Activated naive CD4-positive, alpha-beta T cell treated with anti-CD3 and anti-CD28 coated beads for 36 hours (primary cell): ENCODE measurements at regions of chr3 and their contacts with region 1.

Region 1: GRCh38 chr3:197501879-197502620 is 53.7 kb downstream of the BDH1 start:
- DNase-seq: peak; percentile 73
- H3K4me3 Mint-ChIP-seq: no peak overlapping the region
- H3K27ac Mint-ChIP-seq: no peak overlapping the region
- H3K4me1 Mint-ChIP-seq: no peaks in the 10 kb centered on the region
- H3K27me3 Mint-ChIP-seq: no peaks in the 10 kb centered on the region

Region 2: GRCh38 chr3:196979545-196979944 is 522.5 kb before region 1 on chr3:
- CTCF ChIA-PET with region 1: no interaction called
- intact Hi-C with region 1: loop called (anchors 2 kb)
- DNase-seq: no peak
- H3K4me3 Mint-ChIP-seq: no peak overlapping the region
- H3K27ac Mint-ChIP-seq: no peak overlapping the region
- H3K4me1 Mint-ChIP-seq: peaks cover 6% of the 10 kb centered on the region
- H3K27me3 Mint-ChIP-seq: peaks cover 7% of the 10 kb centered on the region

Region 3: GRCh38 chr3:197224034-197224444 is 278.0 kb before region 1 on chr3:
- CTCF ChIA-PET with region 1: interaction called, 18 read pairs
- intact Hi-C with region 1: loop called (anchors 1 kb)
- DNase-seq: no peak
- H3K4me3 Mint-ChIP-seq: no peak overlapping the region
- H3K27ac Mint-ChIP-seq: no peak overlapping the region
- H3K4me1 Mint-ChIP-seq: peaks cover 37% of the 10 kb centered on the region
- H3K27me3 Mint-ChIP-seq: no peaks in the 10 kb centered on the region

Region 4: GRCh38 chr3:197463279-197463678 is 38.8 kb before region 1 on chr3:
- CTCF ChIA-PET with region 1: no interaction called
- intact Hi-C with region 1: loop called (anchors 5 kb)
- DNase-seq: no peak
- H3K4me3 Mint-ChIP-seq: no peak overlapping the region
- H3K27ac Mint-ChIP-seq: peak overlapping the region; percentile 8
- H3K4me1 Mint-ChIP-seq: peaks cover 44% of the 10 kb centered on the region
- H3K27me3 Mint-ChIP-seq: peaks cover 17% of the 10 kb centered on the region

Region 5: GRCh38 chr3:197478746-197479668 is 23.0 kb before region 1 on chr3:
- CTCF ChIA-PET with region 1: no interaction called
- intact Hi-C with region 1: no loop called
- DNase-seq: no peak
- H3K4me3 Mint-ChIP-seq: no peak overlapping the region
- H3K27ac Mint-ChIP-seq: no peak overlapping the region
- H3K4me1 Mint-ChIP-seq: no peaks in the 10 kb centered on the region
- H3K27me3 Mint-ChIP-seq: peaks cover 3% of the 10 kb centered on the region

Region 6: DNA sequence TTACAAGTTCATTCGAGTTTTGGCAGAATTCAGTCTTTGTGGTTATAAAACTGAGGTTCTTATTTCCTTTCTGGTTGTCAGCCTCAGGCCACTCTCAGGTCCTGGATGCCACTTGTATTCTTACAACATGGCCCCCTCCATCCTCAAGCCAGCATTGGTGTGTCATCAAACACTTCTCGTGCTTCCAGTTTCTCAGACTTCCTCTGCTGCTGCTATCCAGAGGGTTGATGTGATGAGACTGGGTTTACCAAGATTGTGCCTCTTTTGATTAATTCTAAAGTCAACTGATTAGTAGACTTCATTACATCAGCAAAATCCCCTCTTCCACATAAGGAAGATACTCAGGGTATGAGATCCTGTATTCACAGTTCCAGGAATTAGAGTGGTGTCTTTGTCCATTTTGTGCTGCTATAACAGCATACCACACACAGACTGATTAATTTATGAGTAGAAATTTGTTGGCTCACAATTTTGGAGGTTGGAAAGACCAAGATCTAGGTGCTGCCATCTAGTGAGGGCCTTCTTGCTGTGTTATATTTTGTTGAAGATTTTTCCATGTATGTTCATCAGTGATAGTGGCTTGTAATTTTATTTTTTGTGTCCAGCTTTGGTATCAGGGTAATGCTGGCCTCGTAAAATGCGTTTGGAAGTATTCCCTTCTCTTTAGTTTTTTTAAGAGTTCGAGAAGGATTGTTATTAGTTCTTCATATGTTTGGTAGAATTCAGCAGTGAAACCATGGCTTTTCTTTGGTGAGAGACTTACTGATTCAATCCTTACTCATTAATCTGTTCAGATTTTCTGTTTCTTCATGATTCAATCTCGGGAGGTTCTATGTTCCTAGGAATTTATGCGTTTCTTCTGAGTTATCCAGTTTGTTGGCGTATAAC is 300.1 kb after region 1 on chr3:
- CTCF ChIA-PET with region 1: no interaction called
- intact Hi-C with region 1: no loop called
- DNase-seq: peak; percentile 59
- H3K4me3 Mint-ChIP-seq: no peak overlapping the region
- H3K27ac Mint-ChIP-seq: peak overlapping the region; percentile 46
- H3K4me1 Mint-ChIP-seq: peaks cover 53% of the 10 kb centered on the region
- H3K27me3 Mint-ChIP-seq: no peaks in the 10 kb centered on the region